Posterior vena cava (tissue), 2 donors: ENCODE measurements at regions of chr1 and their contacts with region 1.

Region 1: GRCh38 chr1:8283058-8283884 is 34.6 kb upstream of the SLC45A1 start:
- DNase-seq: no peak

Region 2: GRCh38 chr1:8241417-8242014 is 41.8 kb before region 1 on chr1:
- intact Hi-C with region 1: loop called in 1 of 2 experiments (anchors 1 kb)
- DNase-seq: no peak